Activated T-helper 1 cell treated with anti-CD3 and anti-CD28 coated beads, Interleukin-12 subunit alpha, Interleukin-12 subunit beta, Interleukin-2, Interleukin-4 antibody, amounts not matched to agents 30 ng/mL and 10 ng/mL and 1 ng/mL, durations not matched to agents 14 hours and 24 hours and 36 hours (primary cell): ENCODE measurements at regions of chr9 and their contacts with region 1.

Region 1: DNA sequence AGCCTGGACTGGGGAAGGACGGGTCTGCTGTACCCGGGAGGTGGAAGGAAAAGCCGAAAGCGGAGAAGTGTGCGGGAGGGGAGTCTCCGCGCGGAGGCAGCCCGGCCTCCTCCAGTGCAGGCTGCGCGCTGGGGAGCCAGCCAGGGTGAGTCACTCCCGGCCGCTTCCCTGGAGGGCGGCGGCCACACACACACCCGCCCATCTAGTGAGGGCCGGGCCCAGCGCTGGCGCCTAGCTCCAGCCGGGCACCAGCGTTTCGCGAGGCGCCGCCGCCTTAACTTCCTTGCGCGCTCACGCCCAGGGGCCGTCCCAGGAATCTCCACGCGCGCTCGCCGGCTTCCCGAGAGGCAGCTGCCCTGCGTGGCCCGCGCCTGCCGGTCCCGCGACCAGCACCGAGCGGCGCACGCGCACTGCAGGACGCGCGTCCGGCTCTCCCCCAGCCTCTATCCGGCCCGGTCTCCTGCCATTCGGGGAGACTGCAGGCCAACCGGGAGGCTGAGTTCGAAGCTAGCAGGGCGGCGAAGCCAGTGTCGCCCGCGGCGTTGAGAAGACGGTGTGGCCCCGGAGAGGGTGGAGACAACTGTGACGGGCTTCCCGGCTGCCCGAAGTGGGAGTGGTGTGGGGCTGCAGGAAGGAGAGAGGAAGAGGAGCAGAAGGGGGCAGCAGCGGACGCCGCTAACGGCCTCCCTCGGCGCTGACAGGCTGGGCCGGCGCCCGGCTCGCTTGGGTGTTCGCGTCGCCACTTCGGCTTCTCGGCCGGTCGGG is at the start of gene JAK2:
- DNase-seq: peak; percentile 87
- H3K4me3 Mint-ChIP-seq: peak within 1 kb of the TSS; percentile 92
- H3K27ac Mint-ChIP-seq: peak within 1 kb of the TSS; percentile 96
- H3K4me1 Mint-ChIP-seq: peaks cover 54% of the 10 kb centered on the region
- H3K27me3 Mint-ChIP-seq: no peaks in the 10 kb centered on the region
- total RNA-seq, gene JAK2: 30.8 and 32.0 TPM in 2 replicates

Region 2: DNA sequence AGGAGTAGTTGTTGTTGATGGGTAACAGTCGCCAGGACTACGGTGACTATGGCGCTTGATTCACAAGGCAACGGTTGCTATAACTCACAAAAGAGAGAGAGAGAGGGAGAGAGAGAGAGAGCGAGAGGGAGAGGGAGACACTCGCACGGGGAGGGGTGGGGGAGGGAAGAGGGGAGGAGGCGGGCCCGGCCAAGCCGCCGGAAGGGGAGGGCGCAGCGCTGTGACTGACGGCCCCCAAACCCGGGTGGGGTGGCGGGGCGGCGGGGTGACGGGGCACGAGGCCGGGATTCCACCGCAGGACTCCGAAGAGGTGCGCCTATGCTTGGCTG is 1459.0 kb before region 1 on chr9 and contains the start of gene RFX3:
- intact Hi-C with region 1: loop called (anchors 10 kb)
- DNase-seq: peak; percentile 83
- H3K4me3 Mint-ChIP-seq: peak within 1 kb of the TSS; percentile 87
- H3K27ac Mint-ChIP-seq: peak within 1 kb of the TSS; percentile 99
- H3K4me1 Mint-ChIP-seq: peaks cover 63% of the 10 kb centered on the region
- H3K27me3 Mint-ChIP-seq: peaks cover 2% of the 10 kb centered on the region
- total RNA-seq, gene RFX3: 11.2 and 11.3 TPM in 2 replicates

Region 3: GRCh38 chr9:4762108-4762885 is 222.5 kb before region 1 on chr9:
- intact Hi-C with region 1: loop called (anchors 1 kb)
- DNase-seq: peak; percentile 72
- H3K4me3 Mint-ChIP-seq: peak overlapping the region; percentile 68
- H3K27ac Mint-ChIP-seq: peak overlapping the region; percentile 65
- H3K4me1 Mint-ChIP-seq: peaks cover 18% of the 10 kb centered on the region
- H3K27me3 Mint-ChIP-seq: no peaks in the 10 kb centered on the region

Region 4: GRCh38 chr9:4923580-4924544 is 60.9 kb before region 1 on chr9:
- intact Hi-C with region 1: loop called (anchors 1 kb)
- DNase-seq: peak; percentile 19
- H3K4me3 Mint-ChIP-seq: no peak overlapping the region
- H3K27ac Mint-ChIP-seq: no peak overlapping the region
- H3K4me1 Mint-ChIP-seq: peaks cover 33% of the 10 kb centered on the region
- H3K27me3 Mint-ChIP-seq: no peaks in the 10 kb centered on the region

Region 5: GRCh38 chr9:5437254-5438216 is 452.7 kb after region 1 on chr9 and contains the start of gene PLGRKT:
- intact Hi-C with region 1: loop called (anchors 1 kb)
- DNase-seq: peak; percentile 90
- H3K4me3 Mint-ChIP-seq: peak within 1 kb of the TSS; percentile 93
- H3K27ac Mint-ChIP-seq: peak within 1 kb of the TSS; percentile 93
- H3K4me1 Mint-ChIP-seq: peaks cover 66% of the 10 kb centered on the region
- H3K27me3 Mint-ChIP-seq: no peaks in the 10 kb centered on the region
- total RNA-seq, gene PLGRKT: 43.8 and 44.8 TPM in 2 replicates

Region 6: DNA sequence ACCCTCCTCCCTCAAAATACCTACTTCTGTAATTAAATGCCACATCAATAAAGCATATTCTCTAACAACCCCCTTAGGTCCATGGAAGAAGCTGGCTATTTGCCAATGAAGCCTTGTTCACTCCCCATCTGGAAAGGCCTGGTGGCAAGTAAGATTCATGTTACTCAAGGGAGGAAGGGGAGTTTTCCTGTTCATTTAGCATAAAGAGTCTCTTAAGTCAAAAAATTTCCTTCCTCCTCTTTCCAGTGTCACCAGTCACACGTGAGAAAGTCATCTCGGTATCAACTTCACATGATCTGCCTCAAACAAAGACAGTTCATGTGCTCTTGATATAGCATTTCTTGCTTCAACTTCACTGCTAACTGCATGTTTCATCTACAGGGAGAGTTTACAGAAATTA is 611.4 kb after region 1 on chr9:
- intact Hi-C with region 1: loop called (anchors 2 kb)
- DNase-seq: no peak
- H3K4me3 Mint-ChIP-seq: no peak overlapping the region
- H3K27ac Mint-ChIP-seq: no peak overlapping the region
- H3K4me1 Mint-ChIP-seq: peaks cover 29% of the 10 kb centered on the region
- H3K27me3 Mint-ChIP-seq: no peaks in the 10 kb centered on the region

Region 7: GRCh38 chr9:6412487-6413364 is 1427.9 kb after region 1 on chr9 and contains the start of gene UHRF2:
- intact Hi-C with region 1: loop called (anchors 10 kb)
- DNase-seq: peak; percentile 97
- H3K4me3 Mint-ChIP-seq: peak within 1 kb of the TSS; percentile 89
- H3K27ac Mint-ChIP-seq: peak within 1 kb of the TSS; percentile 92
- H3K4me1 Mint-ChIP-seq: peaks cover 27% of the 10 kb centered on the region
- H3K27me3 Mint-ChIP-seq: no peaks in the 10 kb centered on the region
- total RNA-seq, gene UHRF2: 73.0 and 77.3 TPM in 2 replicates